OCI-LY7 (cell line): ENCODE measurements at regions of chr6 and their contacts with region 1.

Region 1: DNA sequence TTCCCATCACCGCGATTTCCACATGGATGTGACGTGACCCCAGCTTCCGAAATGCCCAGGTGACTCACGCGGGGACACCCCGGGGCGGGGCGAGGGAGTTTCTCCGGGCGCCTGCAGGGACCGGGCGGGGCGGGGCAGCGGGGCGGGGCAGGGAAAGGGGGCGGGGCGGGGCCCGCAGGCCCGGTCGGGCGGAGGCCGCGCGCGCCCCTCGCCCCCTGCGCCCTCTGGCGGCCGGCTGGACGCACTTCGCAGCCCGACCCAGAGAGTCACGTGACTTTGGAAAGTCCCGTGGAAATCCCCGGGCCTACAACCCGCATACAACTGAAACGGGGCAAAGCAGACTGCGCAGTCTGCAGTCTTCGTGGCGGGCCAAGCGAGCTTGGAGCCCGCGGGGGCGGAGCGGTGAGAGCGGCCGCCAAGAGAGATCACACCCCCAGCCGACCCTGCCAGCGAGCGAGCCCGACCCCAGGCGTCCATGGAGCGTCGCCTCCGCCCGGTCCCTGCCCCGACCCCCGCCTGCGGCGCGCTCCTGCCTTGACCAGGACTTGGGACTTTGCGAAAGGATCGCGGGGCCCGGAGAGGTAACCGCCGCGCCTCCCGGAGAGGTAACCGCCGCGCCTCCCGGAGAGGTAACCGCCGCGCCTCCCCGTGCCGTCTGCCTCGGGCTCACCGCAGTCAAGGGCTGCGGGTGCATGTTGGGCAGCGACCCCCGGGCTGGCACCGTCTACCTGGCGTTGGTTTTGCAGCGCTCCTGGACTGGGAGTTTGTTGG is at the start of gene TNFAIP3:
- DNase-seq: peak; percentile 96
- H3K4me3 ChIP-seq: peak within 1 kb of the TSS; percentile 85
- H3K27ac ChIP-seq: peak within 1 kb of the TSS; percentile 79
- H3K4me1 ChIP-seq: peaks cover 45% of the 10 kb centered on the region
- CTCF ChIP-seq: peak; percentile 64
- total RNA-seq, gene TNFAIP3: 7.0 and 8.8 TPM in 2 replicates

Region 2: DNA sequence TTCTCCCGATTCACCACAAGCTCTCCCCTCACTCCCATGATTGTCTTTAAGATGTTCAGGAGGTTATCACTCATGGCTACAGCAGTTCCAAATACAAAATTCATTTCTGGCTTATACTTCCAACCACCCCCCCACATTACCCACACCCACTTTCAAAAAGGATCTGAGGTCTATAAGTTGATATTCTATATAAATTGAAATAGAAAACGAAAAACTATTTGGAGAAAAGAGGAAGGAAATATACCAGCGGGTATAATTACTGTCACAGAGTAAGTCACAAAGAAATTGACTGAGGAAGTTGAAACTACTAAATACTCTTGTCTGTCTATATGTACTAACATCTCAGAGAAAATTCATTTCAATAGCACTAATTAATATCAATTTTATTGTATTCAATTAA is 112.7 kb before region 1 on chr6:
- CTCF ChIA-PET with region 1: no interaction called
- POLR2A ChIA-PET with region 1: interaction called, 3 read pairs
- intact Hi-C with region 1: loop called (anchors 2 kb)
- DNase-seq: peak; percentile 57
- H3K4me3 ChIP-seq: peak overlapping the region; percentile 38
- H3K27ac ChIP-seq: peak overlapping the region; percentile 71
- H3K4me1 ChIP-seq: peaks cover 29% of the 10 kb centered on the region
- CTCF ChIP-seq: no peak

Region 3: DNA sequence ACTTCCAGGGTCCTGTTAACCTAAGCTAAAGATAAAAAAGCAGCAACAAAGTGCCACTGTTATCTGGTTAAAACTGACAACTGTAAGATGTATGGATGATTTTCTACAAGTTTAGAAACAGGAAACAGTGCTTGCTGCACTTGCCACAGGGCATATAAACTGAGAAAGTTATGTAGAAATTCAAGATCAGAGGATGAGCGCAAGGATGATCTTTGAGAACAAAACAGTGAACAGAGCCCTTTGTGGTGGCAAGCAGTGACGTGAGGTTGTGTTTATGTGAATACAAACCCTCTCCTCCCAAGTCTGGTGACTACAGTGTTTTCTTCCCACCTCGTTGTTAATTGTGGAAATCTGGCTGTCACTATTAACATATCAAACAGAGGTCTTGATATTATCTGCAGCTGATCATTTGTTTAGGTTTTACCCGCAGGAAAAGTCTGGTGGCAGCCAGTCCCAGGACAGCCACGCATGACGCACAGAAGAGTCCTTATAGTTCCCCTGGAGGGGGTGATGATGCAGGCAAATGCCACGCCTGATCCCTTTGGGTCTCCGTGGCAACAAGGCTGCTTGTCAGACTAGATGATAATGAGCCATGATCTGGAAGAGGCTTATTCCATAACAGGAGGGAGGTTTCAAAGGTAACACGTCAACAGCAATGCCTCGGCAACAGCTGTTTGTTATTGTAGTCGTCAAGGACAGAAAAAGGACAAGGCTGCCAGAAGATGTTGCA is 43.1 kb before region 1 on chr6:
- CTCF ChIA-PET with region 1: no interaction called
- POLR2A ChIA-PET with region 1: no interaction called
- intact Hi-C with region 1: loop called (anchors 5 kb)
- DNase-seq: no peak
- H3K4me3 ChIP-seq: no peak overlapping the region
- H3K27ac ChIP-seq: no peak overlapping the region
- H3K4me1 ChIP-seq: no peaks in the 10 kb centered on the region
- CTCF ChIP-seq: no peak

Region 4: GRCh38 chr6:137903933-137904821 is 37.1 kb after region 1 on chr6:
- CTCF ChIA-PET with region 1: interaction called, 6 read pairs
- POLR2A ChIA-PET with region 1: interaction called, 6 read pairs
- intact Hi-C with region 1: loop called (anchors 1 kb)
- DNase-seq: peak; percentile 73
- H3K4me3 ChIP-seq: peak overlapping the region; percentile 32
- H3K27ac ChIP-seq: peak overlapping the region; percentile 29
- H3K4me1 ChIP-seq: peaks cover 16% of the 10 kb centered on the region
- CTCF ChIP-seq: no peak

Region 5: DNA sequence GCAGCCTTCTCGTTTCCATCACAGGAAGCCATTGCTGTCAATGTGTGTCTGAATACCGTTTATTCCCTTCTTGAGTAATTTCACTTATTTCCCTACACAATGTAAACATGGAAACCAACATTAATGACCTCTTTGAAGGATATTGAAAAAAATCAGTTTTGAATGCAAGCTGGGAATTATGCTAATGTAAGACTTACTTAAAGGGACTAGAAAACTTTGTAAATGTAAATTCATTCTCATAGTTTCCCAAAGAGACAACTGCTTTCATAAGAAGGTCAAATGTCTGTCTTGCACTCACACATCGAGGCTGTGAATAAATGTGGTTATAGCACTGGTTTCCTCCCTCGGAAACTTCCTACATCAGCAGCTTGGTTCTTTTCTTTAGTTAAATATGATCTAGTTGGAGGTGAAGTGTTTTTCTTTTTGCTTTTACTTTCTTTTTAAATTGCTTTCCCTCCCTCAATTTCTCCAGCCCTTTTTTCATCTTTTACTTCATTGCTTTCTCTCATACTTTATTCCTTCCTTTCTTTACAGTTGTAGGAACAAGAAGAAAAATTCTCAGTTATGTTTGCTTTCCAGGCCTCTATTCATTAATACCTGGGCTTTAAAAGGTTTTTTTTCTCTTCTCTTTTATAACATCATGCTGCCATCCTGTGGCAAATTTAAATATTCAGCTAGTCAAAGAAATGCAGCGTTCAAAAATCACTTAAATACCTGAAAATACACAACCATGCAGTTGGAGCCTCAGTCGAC is 108.3 kb after region 1 on chr6:
- CTCF ChIA-PET with region 1: interaction called, 4 read pairs
- POLR2A ChIA-PET with region 1: interaction called, 3 read pairs
- intact Hi-C with region 1: loop called (anchors 1 kb)
- DNase-seq: peak; percentile 62
- H3K4me3 ChIP-seq: no peak overlapping the region
- H3K27ac ChIP-seq: no peak overlapping the region
- H3K4me1 ChIP-seq: peaks cover 17% of the 10 kb centered on the region
- CTCF ChIP-seq: peak; percentile 84